Astrocyte of the cerebellum (primary cell): ENCODE measurements at regions of chr13 and their contacts with region 1.

Region 1: GRCh38 chr13:60155978-60156377 is 7.8 kb downstream of the DIAPH3 start:
- DNase-seq: no peak
- H3K4me3 ChIP-seq: no peak overlapping the region
- CTCF ChIP-seq: peak; percentile 28

Region 2: GRCh38 chr13:60090574-60090973 is 65.4 kb before region 1 on chr13:
- in situ Hi-C with region 1: loop called (anchors 5 kb)
- DNase-seq: no peak
- H3K4me3 ChIP-seq: no peak overlapping the region
- CTCF ChIP-seq: no peak